ENCODE measurements at regions of chr7 and their contacts with region 1.

Region 1: GRCh38 chr7:132580717-132581285 is 4.5 kb upstream of the PLXNA4 start:
- DNase-seq: peak; percentile 64
- ATAC-seq: peak; percentile 72
- H3K4me3 ChIP-seq: no peak overlapping the region
- H3K27ac ChIP-seq: no peak overlapping the region
- H3K4me1 ChIP-seq: 0 out of 2 replicates have a peak, but pooled peaks cover 2% of the 10 kb centered on the region
- H3K27me3 ChIP-seq: peaks cover 25% of the 10 kb centered on the region
- CTCF ChIP-seq: peak; percentile 68
- POLR2A ChIP-seq: no peak
- RAD21 ChIP-seq: peak; percentile 66

Region 2: DNA sequence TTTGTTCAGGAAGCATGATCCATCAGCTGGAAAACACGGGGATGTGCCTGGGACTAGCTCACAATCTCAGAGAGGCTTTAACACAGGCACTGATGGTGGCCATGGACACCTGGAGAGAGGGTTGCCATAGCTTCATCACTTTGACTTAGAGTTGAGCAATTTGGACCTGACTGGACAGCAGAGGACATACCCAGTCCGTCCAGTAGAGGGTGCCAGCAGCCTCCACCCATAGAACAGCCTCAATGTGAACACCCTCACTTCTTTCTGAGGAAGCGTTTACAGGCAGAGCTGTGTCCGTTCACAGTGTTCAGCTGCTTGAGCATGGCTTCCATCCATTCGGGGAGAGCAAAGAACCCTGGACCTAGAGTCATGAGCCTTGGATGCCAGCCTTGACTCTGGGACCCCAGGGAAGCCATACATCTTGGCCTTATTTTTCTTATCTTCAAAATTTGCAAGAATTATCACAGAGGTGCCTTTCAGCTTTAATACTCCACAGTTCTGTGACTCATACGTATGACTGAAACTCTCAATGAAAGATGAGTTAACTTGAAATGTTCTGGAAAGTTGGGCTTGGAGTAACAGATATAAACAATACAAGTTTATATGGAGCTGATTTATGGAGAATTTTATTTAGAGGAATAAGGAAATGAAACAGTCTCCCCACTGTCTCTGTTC is 721.5 kb before region 1 on chr7:
- CTCF ChIA-PET with region 1: interaction called, 3 read pairs
- POLR2A ChIA-PET with region 1: no interaction called
- dilution Hi-C with region 1: no loop called
- in situ Hi-C with region 1: no loop called
- intact Hi-C with region 1: loop called (anchors 1 kb)
- DNase-seq: peak; percentile 62
- ATAC-seq: peak; percentile 99
- H3K4me3 ChIP-seq: no peak overlapping the region
- H3K27ac ChIP-seq: no peak overlapping the region
- H3K4me1 ChIP-seq: no peaks in the 10 kb centered on the region
- H3K27me3 ChIP-seq: peaks cover 2% of the 10 kb centered on the region; the same call in 1 of the 2 replicates
- CTCF ChIP-seq: peak; percentile 75
- POLR2A ChIP-seq: no peak
- RAD21 ChIP-seq: peak; percentile 62

Region 3: DNA sequence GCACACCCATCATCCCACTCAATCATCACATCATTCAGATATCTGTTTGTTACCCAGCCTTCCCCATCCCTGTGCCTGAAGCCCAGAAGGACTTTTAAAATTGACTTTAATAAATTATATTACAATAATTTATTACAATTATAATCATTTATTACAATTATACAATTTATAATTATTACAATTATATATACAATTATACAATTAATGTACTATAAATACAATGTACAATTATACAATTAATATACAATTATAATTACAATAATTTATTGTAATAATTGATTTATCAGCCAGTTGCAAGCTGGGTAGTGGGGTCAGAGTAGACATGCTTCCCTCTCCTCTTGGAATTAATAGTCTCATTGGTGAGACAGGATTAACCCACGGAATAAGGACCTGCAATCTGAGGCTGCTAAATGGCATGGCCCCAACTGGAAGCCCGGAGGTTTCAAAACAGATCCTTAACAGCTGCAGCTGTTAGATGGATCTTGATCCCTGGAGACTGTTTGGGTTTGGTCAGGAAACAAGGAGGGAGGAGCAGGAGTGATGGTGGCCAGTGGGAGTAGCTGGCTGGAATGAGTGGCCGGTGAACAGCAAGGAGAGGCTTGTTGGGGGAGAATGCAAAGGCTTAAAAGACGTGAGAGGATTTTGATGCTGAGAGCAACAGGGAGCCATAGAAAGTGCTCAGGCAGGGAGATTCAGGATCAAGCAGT is 621.5 kb before region 1 on chr7:
- CTCF ChIA-PET with region 1: no interaction called
- POLR2A ChIA-PET with region 1: no interaction called
- dilution Hi-C with region 1: no loop called
- in situ Hi-C with region 1: loop called (anchors 25 kb)
- intact Hi-C with region 1: no loop called
- DNase-seq: no peak
- ATAC-seq: no peak
- H3K4me3 ChIP-seq: no peak overlapping the region
- H3K27ac ChIP-seq: no peak overlapping the region
- H3K4me1 ChIP-seq: no peaks in the 10 kb centered on the region
- H3K27me3 ChIP-seq: no peaks in the 10 kb centered on the region; the same call in none of the 2 replicates
- CTCF ChIP-seq: no peak
- POLR2A ChIP-seq: no peak
- RAD21 ChIP-seq: no peak

Region 4: DNA sequence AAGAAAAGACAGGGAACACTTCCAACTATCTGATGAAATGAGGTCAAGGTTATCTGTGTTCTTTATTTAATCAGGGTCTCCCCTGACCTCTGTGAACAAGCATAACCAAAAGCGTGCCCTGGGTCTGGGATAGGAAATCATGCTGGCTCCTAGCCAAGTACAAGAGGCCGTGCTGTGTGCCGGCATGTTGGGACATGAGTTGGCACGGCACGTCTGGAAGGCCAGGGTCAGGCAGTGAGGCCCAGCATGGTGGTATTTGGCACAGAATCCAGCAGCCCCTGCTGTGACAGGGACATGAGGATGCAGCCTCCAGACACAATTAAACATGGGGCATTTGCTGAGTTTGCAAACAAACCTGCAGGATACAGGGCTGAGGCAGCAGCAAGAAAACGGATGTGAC is 324.9 kb before region 1 on chr7:
- CTCF ChIA-PET with region 1: no interaction called
- POLR2A ChIA-PET with region 1: no interaction called
- dilution Hi-C with region 1: no loop called
- in situ Hi-C with region 1: no loop called
- intact Hi-C with region 1: no loop called
- DNase-seq: no peak
- ATAC-seq: no peak
- H3K4me3 ChIP-seq: no peak overlapping the region
- H3K27ac ChIP-seq: no peak overlapping the region
- H3K4me1 ChIP-seq: no peaks in the 10 kb centered on the region
- H3K27me3 ChIP-seq: no peaks in the 10 kb centered on the region
- CTCF ChIP-seq: no peak
- POLR2A ChIP-seq: no peak
- RAD21 ChIP-seq: no peak

Region 5: DNA sequence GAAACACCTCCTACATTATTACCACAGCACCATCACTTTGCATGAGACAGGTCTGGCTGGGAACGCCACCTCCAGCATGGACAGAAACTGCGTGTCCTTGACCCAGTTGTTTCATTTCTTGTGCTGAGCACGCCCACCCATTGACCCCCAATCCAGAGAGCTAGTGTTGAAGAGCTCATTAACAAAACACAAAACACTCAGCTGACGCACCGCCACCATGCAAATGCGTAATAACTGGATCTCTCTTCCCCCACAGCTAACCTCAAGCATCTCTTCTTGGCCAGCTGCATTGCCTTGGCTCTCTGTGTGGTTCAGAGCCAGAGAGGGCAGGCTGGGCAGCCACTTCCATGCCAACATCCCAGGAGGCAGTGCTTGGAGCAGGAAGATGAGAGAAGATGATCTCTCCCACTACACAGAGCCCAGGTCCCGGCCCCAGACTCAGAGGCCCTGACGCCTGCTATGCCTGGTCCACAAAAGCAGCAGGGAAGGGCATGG is 178.0 kb before region 1 on chr7:
- CTCF ChIA-PET with region 1: no interaction called
- POLR2A ChIA-PET with region 1: no interaction called
- dilution Hi-C with region 1: no loop called
- in situ Hi-C with region 1: no loop called
- intact Hi-C with region 1: no loop called
- DNase-seq: no peak
- ATAC-seq: no peak
- H3K4me3 ChIP-seq: no peak overlapping the region
- H3K27ac ChIP-seq: no peak overlapping the region
- H3K4me1 ChIP-seq: no peaks in the 10 kb centered on the region
- H3K27me3 ChIP-seq: no peaks in the 10 kb centered on the region
- CTCF ChIP-seq: no peak
- POLR2A ChIP-seq: no peak
- RAD21 ChIP-seq: no peak

Region 6: GRCh38 chr7:133320891-133321290 is 740.1 kb after region 1 on chr7:
- CTCF ChIA-PET with region 1: no interaction called
- POLR2A ChIA-PET with region 1: no interaction called
- dilution Hi-C with region 1: no loop called
- in situ Hi-C with region 1: no loop called
- intact Hi-C with region 1: no loop called
- DNase-seq: no peak
- ATAC-seq: no peak
- H3K4me3 ChIP-seq: no peak overlapping the region
- H3K27ac ChIP-seq: no peak overlapping the region
- H3K4me1 ChIP-seq: no peaks in the 10 kb centered on the region
- H3K27me3 ChIP-seq: no peaks in the 10 kb centered on the region
- CTCF ChIP-seq: no peak
- POLR2A ChIP-seq: no peak
- RAD21 ChIP-seq: no peak

Region 7: DNA sequence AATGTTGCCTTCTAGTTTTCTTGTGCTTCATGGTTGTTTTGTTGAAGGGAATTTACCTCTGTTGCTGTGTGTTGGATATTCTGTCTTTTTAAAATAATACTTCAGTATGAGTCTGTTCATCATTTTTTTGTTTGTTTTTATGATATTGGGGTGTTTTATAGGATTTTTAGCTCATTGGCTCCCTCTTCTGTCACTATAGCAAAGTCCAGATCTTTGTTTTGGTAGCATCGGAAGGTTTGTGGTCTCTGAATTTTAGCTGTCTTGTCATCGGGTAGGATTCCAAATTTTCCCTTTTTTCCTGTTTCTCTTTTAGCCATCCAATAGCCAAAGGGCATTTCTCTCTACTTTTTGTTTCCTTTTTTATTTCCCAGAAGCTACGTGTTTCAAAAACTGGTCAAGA is 763.5 kb after region 1 on chr7:
- CTCF ChIA-PET with region 1: no interaction called
- POLR2A ChIA-PET with region 1: no interaction called
- dilution Hi-C with region 1: no loop called
- in situ Hi-C with region 1: no loop called
- intact Hi-C with region 1: loop called (anchors 5 kb)
- DNase-seq: peak; percentile 32
- ATAC-seq: peak; percentile 59
- H3K4me3 ChIP-seq: no peak overlapping the region
- H3K27ac ChIP-seq: no peak overlapping the region
- H3K4me1 ChIP-seq: no peaks in the 10 kb centered on the region
- H3K27me3 ChIP-seq: no peaks in the 10 kb centered on the region
- CTCF ChIP-seq: peak; percentile 63
- POLR2A ChIP-seq: no peak
- RAD21 ChIP-seq: peak; percentile 64